ENCODE measurements at regions of chr19 and their contacts with region 1.

Region 1: GRCh38 chr19:40285353-40286234 is 449 bp upstream of the AKT2 start:
- DNase-seq: peak; percentile 95 to 100 (median 96)
- ATAC-seq: peak; percentile 72
- H3K4me3 ChIP-seq: peak overlapping the region; percentile 63 to 80
- H3K4me3 Mint-ChIP-seq: peak overlapping the region; percentile 98
- H3K27ac ChIP-seq: peak overlapping the region; percentile 92 to 94
- H3K27ac Mint-ChIP-seq: peak overlapping the region; percentile 99
- H3K4me1 ChIP-seq: peaks cover 38% of the 10 kb centered on the region
- H3K4me1 Mint-ChIP-seq: peaks cover 48% of the 10 kb centered on the region
- H3K27me3 ChIP-seq: no peaks in the 10 kb centered on the region
- H3K27me3 Mint-ChIP-seq: no peaks in the 10 kb centered on the region
- CTCF ChIP-seq: no peak

Region 2: DNA sequence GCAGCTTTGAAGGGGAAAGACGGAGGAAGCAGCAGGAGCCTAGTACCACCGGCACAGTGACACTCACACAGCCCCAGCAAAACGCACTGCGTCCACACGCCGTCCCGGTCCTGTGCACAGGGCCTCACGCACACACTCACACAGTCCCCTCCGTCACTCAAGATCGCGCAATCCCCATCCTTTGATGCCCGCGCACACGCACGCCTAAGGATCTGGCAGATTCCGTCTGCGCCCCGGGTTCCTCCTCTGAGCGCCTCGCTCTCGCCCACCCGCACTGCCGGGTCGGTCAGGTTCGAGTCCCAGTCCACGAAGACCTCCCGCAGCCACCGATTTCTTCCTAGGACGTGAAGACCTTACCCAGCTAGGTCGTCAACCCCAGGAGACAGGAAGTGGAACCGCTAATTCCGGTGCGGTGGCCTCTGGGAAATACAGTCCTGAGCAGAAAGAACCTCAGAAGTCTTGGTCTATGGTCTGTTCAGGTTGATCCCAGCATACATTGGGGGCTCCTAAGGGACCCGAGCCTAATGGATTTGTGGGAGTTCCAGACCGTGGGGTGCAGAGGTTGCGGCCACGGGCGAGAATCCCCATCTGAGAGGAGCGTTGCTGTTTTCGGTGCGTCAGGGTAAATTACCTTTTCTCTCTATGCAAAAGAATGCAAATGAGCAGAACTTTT is 229.6 kb before region 1 on chr19 and contains the start of gene ZNF780B:
- CTCF ChIA-PET with region 1: no interaction called
- POLR2A ChIA-PET with region 1: no interaction called
- intact Hi-C with region 1: loop called in 1 of 2 experiments (anchors 2 kb)
- DNase-seq: peak; percentile 29 to 82 (median 69)
- ATAC-seq: peak; percentile 90
- H3K4me3 ChIP-seq: peak within 1 kb of the TSS; percentile 72 to 83
- H3K4me3 Mint-ChIP-seq: peak within 1 kb of the TSS; percentile 100
- H3K27ac ChIP-seq: peak within 1 kb of the TSS; percentile 78
- H3K27ac Mint-ChIP-seq: peak within 1 kb of the TSS; percentile 99
- H3K4me1 ChIP-seq: peaks cover 21% of the 10 kb centered on the region
- H3K4me1 Mint-ChIP-seq: peaks cover 58% of the 10 kb centered on the region
- H3K27me3 ChIP-seq: no peaks in the 10 kb centered on the region
- H3K27me3 Mint-ChIP-seq: peaks cover 8% of the 10 kb centered on the region
- CTCF ChIP-seq: no peak
- total RNA-seq, gene ZNF780B: 9.8 to 14.8 TPM

Region 3: DNA sequence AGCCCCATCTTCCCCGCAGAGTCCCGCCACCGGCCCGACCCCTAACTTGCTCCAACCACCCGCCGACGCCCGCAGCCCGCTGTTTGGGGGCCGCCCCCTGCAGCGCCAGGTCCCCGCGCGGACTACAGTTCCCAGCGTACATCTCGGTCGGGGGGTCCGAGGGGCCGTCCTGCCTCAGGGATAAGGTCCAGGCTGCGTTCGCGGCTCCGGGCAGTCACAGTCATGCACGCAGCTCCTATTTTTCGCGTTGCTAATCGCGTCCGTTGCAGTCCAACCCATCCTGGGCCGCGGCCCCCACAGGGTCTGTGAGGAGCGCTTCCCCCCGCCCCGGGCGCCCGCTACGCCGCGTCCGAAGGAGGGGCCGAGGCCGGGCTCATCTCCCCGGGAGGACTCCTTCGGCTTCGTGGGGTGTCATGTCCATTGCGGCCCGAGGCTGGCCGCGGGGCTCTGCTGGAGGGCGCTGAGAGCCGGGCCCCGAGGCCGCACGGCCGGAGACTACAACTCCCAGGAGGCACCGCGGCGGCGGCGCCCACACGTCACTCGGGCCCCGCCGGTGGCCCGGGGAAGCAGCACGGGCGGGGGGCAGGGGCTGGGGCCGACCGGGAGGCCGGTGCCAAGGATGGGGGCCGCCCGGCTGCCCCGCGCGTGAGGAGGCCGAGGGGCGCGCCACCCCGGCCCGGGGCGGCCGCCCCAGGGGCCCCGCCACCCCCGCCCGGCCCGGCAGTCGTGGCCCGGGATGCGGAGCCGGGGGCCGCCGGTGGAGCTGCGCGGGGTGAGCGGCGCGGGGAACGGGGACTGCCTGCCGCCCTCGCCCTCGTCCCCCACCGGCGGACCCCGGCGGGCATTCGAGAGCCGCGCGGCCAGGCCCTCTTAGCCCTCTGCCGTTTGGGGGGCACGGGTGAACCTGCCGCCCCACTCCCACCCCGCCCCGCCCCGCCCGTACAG is 94.4 kb before region 1 on chr19 and contains the start of gene MAP3K10:
- CTCF ChIA-PET with region 1: no interaction called
- POLR2A ChIA-PET with region 1: no interaction called
- intact Hi-C with region 1: loop called in 1 of 2 experiments (anchors 1 kb)
- DNase-seq: peak; percentile 41 to 86 (median 70)
- ATAC-seq: peak; percentile 79
- H3K4me3 ChIP-seq: peak within 1 kb of the TSS; percentile 82 to 100
- H3K4me3 Mint-ChIP-seq: peak within 1 kb of the TSS; percentile 91
- H3K27ac ChIP-seq: peak within 1 kb of the TSS; percentile 81 to 90
- H3K27ac Mint-ChIP-seq: peak within 1 kb of the TSS; percentile 91
- H3K4me1 ChIP-seq: peaks cover 16% of the 10 kb centered on the region
- H3K4me1 Mint-ChIP-seq: peaks cover 34% of the 10 kb centered on the region
- H3K27me3 ChIP-seq: no peaks in the 10 kb centered on the region
- H3K27me3 Mint-ChIP-seq: no peaks in the 10 kb centered on the region
- CTCF ChIP-seq: no peak
- total RNA-seq, gene MAP3K10: 26.4 to 27.7 TPM

Region 4: DNA sequence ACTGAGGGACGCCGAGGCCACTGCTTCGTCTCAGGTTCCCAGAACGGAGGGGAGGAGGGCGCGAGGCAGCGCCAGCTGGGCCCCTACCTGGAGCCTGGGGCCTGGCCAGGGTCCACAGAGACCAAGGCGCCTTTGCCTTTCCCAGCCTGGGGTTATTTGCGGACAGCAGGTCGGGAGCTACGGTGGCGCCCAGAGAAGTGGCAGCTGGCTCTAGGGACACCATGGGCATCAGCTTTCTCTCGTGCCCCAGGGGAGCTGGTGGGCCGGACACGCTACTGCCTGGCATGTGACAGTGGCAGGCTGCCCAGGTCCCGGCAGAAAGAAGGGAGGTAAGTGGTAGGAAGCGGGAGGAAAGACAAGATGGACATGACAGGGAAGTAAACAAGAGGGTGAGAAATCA is 19.5 kb before region 1 on chr19:
- CTCF ChIA-PET with region 1: no interaction called
- POLR2A ChIA-PET with region 1: no interaction called
- intact Hi-C with region 1: no loop called
- DNase-seq: no peak
- ATAC-seq: no peak
- H3K4me3 ChIP-seq: no peak overlapping the region
- H3K4me3 Mint-ChIP-seq: no peak overlapping the region
- H3K27ac ChIP-seq: no peak overlapping the region
- H3K27ac Mint-ChIP-seq: peak overlapping the region; percentile 22
- H3K4me1 ChIP-seq: peaks cover 6% of the 10 kb centered on the region
- H3K4me1 Mint-ChIP-seq: peaks cover 42% of the 10 kb centered on the region
- H3K27me3 ChIP-seq: no peaks in the 10 kb centered on the region
- H3K27me3 Mint-ChIP-seq: no peaks in the 10 kb centered on the region
- CTCF ChIP-seq: no peak

Region 5: DNA sequence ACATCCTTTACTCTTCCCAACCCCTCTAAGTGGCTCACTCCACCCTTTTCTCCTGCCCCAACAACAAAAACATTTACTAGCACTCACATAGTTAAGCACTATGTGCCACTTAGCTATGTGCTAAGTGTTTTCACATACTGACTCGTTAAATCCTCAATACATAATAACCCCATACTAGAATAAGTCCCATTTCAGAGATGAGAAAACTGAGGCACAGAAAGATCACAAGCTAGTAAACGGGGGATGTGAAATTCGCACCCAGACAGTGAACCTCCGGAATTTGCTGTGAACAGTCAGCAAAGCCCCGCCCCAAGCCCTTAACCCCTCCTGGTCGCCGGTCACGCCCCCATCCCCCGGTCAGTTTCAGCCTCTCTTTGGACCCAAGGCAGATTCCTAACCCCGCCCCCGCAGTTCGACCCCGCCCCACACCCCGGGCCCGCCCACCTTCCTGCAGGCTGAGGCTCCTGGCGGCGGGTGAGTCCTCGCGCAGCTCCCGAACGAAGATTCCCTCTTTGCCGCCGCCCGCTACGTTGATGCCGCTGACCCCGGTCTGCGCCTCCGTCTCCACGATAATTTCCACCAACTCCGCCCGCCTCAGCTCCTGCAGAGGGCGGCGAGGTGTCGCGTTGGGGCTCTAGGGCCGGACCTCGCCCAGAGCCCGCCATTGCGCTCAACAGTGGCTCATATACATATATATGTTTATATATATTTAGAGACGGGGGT is 117.8 kb after region 1 on chr19:
- CTCF ChIA-PET with region 1: no interaction called
- POLR2A ChIA-PET with region 1: no interaction called
- intact Hi-C with region 1: loop called (anchors 1 kb)
- DNase-seq: peak; percentile 56 to 83 (median 77)
- ATAC-seq: peak; percentile 55
- H3K4me3 ChIP-seq: peak overlapping the region; percentile 70 to 89
- H3K4me3 Mint-ChIP-seq: peak overlapping the region; percentile 95
- H3K27ac ChIP-seq: peak overlapping the region; percentile 56 to 63
- H3K27ac Mint-ChIP-seq: peak overlapping the region; percentile 84
- H3K4me1 ChIP-seq: peaks cover 13% of the 10 kb centered on the region
- H3K4me1 Mint-ChIP-seq: peaks cover 29% of the 10 kb centered on the region
- H3K27me3 ChIP-seq: no peaks in the 10 kb centered on the region
- H3K27me3 Mint-ChIP-seq: no peaks in the 10 kb centered on the region
- CTCF ChIP-seq: no peak

Region 6: DNA sequence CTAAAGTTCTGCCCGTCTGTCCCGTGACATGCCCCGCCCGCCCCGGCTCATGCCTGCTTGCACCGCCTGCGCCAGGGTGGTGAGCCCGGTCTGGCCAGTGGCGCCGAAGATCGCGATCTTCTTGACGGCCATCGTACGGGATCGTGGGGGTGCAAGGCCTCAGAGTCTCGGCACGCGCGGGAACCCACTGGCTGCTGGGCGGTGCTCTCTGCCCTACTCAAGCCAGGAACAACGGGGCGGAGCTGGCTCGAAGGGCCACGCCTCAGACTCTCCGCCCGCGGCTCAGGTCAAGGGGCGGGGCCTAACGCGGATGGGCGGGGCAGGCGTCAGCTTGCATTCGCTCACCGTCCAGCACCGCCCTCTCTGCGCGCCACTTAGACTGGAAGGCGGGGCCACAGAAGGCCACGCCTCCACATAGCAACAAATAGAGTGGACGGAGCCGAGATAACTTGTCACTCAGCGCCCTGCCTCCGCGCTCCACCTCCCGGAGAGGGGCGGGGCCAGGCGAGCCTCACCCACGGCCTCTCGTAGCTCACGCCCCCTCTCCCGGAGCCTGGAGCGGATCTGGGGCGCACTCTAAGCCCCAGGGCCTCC is 180.1 kb after region 1 on chr19 and contains the start of gene BLVRB:
- CTCF ChIA-PET with region 1: no interaction called
- POLR2A ChIA-PET with region 1: no interaction called
- intact Hi-C with region 1: loop called in 1 of 2 experiments (anchors 1 kb)
- DNase-seq: peak; percentile 98 to 100 (median 100)
- ATAC-seq: peak; percentile 77
- H3K4me3 ChIP-seq: peak within 1 kb of the TSS; percentile 60 to 72
- H3K4me3 Mint-ChIP-seq: peak within 1 kb of the TSS; percentile 81
- H3K27ac ChIP-seq: peak within 1 kb of the TSS; percentile 41 to 93
- H3K27ac Mint-ChIP-seq: peak within 1 kb of the TSS; percentile 89
- H3K4me1 ChIP-seq: peaks cover 25% of the 10 kb centered on the region
- H3K4me1 Mint-ChIP-seq: peaks cover 26% of the 10 kb centered on the region
- H3K27me3 ChIP-seq: peaks cover 0 to 2% of the 10 kb centered on the region in 2 experiments
- H3K27me3 Mint-ChIP-seq: peaks cover 13% of the 10 kb centered on the region
- CTCF ChIP-seq: no peak
- total RNA-seq, gene BLVRB: 5.1 to 6.4 TPM

Region 7: DNA sequence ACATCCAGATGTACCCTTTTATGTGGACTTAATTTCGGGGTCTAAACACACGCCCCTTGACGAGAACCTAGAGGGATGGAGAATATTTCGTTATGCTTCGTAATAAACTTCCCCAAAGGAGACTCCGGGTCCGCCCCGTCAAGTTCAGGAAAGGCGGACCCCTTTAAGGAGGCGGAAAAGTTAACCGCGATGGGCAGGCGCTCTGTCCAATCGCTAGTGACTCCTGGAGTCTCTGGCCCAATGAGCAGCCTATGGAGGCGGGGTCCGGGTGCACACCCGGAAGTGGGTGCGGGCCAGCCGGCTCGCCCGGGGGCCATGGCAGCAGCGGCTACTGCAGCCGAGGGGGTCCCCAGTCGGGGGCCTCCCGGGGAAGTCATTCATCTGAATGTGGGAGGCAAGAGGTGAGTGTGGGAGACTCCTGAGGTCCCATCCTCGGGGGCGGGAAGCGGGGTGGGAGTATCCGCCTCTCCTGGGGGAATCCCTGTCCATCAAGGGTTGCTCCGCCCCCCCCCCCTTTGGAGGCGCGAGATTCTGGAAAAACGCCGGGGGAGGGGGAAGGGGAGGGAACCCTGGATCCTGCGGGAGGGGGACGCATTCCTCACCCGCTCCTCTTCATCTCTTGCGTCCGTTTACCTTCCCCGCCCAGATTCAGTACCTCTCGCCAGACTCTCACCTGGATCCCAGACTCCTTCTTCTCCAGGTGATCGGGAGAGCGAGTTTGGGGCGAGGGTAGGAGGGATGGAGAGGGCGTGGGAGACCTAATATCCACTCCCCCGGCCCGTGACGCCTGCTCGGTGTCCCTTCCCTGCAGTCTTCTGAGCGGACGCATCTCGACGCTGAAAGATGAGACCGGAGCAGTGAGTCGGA is 291.2 kb after region 1 on chr19 and contains the start of gene SHKBP1:
- CTCF ChIA-PET with region 1: no interaction called
- POLR2A ChIA-PET with region 1: no interaction called
- intact Hi-C with region 1: loop called in 1 of 2 experiments (anchors 1 kb)
- DNase-seq: peak; percentile 84 to 97 (median 93)
- ATAC-seq: peak; percentile 99
- H3K4me3 ChIP-seq: peak within 1 kb of the TSS; percentile 72 to 94
- H3K4me3 Mint-ChIP-seq: peak within 1 kb of the TSS; percentile 90
- H3K27ac ChIP-seq: peak within 1 kb of the TSS; percentile 61 to 75
- H3K27ac Mint-ChIP-seq: peak within 1 kb of the TSS; percentile 80
- H3K4me1 ChIP-seq: peaks cover 20% of the 10 kb centered on the region
- H3K4me1 Mint-ChIP-seq: peaks cover 21% of the 10 kb centered on the region
- H3K27me3 ChIP-seq: no peaks in the 10 kb centered on the region
- H3K27me3 Mint-ChIP-seq: no peaks in the 10 kb centered on the region
- CTCF ChIP-seq: no peak
- total RNA-seq, gene SHKBP1: 93.8 to 95.3 TPM